Heart right ventricle (tissue), 16 donors: ENCODE measurements at regions of chr19 and their contacts with region 1.

Region 1: DNA sequence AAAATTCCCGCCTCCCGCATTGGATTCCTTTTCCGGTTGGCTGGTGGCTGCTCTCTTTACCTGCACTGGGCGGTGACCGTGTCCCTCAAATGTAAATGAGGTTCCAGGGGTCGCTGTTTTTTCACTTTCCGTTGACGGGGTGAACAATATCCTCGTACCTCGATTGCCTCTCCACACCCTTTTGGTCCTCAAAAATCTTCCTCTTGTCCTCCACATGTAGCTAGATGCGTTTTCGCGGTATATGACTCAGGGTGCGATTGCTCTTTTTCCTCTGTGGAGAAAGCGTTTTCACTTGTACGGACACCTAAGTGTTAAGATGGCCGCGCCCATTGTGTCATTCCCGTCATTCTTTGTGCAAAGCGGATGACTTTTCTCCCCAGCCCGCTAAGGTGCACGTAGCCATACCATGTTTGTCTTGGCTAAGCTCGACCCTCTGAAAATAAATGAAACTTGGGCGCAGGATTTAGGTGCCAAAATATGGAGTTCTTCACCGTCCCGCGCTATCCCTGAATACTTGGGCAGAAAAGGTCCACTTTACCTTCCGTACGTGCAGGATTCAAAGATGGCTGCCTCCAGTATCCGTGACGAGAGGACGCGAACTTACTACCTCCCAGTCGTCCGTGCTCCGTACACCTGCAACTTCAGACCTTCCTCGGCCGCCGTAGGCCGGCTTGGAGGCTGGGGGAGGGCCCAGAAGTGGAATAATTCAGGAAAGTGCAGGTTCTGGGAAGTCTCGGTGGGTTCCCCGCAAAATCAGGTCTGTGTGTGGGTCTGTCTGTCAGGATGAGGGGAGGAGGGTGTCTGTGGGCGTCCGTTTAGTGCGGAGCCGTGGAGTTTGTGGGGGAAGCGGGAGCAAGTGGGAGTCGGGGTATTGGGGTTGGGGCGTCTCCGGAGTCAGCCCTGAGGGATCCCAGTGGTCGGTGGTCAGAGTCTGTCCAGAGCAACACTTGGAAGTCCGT is at the start of gene ZNF613:
- DNase-seq: peak; percentile 86 to 92
- ATAC-seq: peak; percentile 96 to 99 (median 98)
- H3K4me3 ChIP-seq: peak within 1 kb of the TSS; percentile 69 to 91 (median 80)
- H3K27ac ChIP-seq: peak within 1 kb of the TSS; percentile 81 to 96 (median 89)
- H3K4me1 ChIP-seq: peaks cover 0 to 13% (median 10%) of the 10 kb centered on the region in 9 donors
- H3K27me3 ChIP-seq: no peaks in the 10 kb centered on the region
- CTCF ChIP-seq: peak in 6 of 9 donors; percentile 21 to 57 (median 36)
- total RNA-seq, gene ZNF613: 2.4 to 7.1 (median 5.2) TPM

Region 2: GRCh38 chr19:51784922-51785690 is 142.0 kb before region 1 on chr19:
- intact Hi-C with region 1: no loop called
- DNase-seq: peak; percentile 29 to 66
- ATAC-seq: peak; percentile 65 to 91 (median 77)
- H3K4me3 ChIP-seq: no peak overlapping the region
- H3K27ac ChIP-seq: peak overlapping the region in 7 of 10 donors; percentile 43 to 85 (median 54)
- H3K4me1 ChIP-seq: peaks cover 0 to 70% (median 5%) of the 10 kb centered on the region in 9 donors
- H3K27me3 ChIP-seq: peaks cover 0 to 4% (median 0%) of the 10 kb centered on the region in 7 donors
- CTCF ChIP-seq: no peak

Region 3: DNA sequence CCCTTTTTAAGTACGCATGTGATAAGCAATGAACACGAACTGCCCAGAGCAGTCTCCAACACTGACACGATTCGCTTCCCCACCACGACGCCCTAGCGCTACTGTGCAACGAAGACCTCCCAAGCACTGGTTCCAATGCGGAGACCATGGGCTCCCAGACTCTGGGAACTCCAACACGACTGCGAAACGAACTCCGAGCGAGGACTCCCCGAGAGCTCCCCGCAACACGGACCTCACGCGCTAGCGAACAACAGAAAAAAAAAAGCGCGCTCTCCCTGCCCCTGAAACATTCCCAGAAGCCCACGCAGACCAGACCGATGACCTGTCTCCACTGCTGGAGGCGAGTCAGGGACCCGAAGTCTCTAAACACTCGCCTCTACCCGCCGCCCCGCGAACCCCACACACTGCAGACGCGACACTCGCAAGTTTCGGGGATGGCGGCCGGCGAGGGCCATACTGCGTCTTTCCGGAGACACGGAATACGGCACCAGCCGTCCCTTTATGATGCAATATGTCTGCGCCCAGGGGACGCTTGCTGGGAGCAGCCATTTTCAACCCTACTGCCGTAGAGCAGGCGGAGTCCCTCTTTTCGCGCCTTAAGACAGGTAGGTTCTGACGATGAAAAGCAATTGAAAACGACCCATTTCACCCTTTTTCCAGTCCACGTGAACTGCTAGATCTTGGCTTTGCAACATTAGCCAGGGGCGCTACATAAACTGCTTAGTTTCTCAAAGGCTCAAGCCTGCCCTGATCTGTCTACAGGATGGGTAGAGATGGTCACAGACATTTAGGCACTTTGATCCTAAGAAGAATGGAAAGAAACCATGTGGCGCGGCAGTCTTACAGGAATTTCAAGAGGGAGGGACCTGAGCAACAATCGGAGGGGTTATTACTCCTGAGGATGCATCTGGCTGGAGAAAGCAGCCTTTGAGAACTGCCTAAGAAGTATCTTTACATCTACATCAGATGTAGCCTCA is 39.3 kb before region 1 on chr19 and contains the start of gene ZNF577:
- intact Hi-C with region 1: no loop called
- DNase-seq: peak; percentile 91 to 96
- ATAC-seq: peak; percentile 97 to 100 (median 100)
- H3K4me3 ChIP-seq: peak within 1 kb of the TSS; percentile 55 to 95 (median 77)
- H3K27ac ChIP-seq: peak within 1 kb of the TSS in 9 of 10 donors; percentile 73 to 85 (median 79)
- H3K4me1 ChIP-seq: peaks cover 0 to 15% (median 10%) of the 10 kb centered on the region in 9 donors
- H3K27me3 ChIP-seq: no peaks in the 10 kb centered on the region
- CTCF ChIP-seq: no peak
- total RNA-seq, gene ZNF577: 4.6 to 12.4 (median 8.6) TPM

Region 4: DNA sequence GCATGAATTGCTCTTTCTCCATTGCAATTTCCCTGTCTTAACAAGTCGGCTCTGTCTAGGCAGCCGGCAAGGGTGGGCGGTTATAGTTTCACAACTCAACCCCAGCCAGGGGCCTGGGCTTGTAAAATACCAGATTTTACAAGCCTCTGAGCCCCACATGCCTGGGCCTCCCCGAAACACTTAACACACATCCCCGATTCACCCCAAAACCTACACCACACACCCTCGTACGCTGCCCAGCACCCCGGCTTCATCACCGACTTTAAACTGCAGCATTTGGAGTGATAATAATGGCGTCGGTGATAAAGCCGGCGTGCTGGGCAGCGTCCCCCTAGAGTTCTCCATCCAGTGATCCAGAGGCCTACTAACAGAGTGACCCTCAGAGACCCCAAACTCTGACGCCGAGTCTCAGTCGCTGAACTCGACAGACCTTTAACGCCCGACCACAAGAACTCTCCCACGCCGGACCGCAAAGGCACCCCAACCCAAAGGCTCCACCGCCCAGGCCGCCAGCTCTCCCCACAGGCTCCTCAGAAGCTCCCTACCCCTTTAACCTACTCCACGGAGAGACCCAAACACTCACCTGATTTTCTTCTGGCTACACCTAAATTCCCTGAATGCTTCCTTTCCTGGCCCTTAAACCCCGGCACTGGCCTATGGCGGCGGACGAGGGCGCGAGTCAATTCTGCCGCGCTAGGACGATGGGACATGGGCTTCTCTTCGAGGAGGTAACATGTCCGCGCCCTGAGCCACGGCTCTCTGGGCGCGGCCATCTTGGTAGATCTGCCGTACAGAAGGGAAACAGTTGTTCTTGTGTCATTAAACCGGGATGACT is 22.5 kb before region 1 on chr19 and contains the start of gene ZNF649:
- intact Hi-C with region 1: loop called in 1 of 10 experiments (anchors 2 kb)
- DNase-seq: peak; percentile 85 to 87
- ATAC-seq: peak; percentile 99 to 100 (median 100)
- H3K4me3 ChIP-seq: peak within 1 kb of the TSS; percentile 47 to 97 (median 73)
- H3K27ac ChIP-seq: peak within 1 kb of the TSS; percentile 15 to 93 (median 86)
- H3K4me1 ChIP-seq: peaks cover 0 to 15% (median 12%) of the 10 kb centered on the region in 9 donors
- H3K27me3 ChIP-seq: peaks cover 0 to 30% (median 18%) of the 10 kb centered on the region in 7 donors
- CTCF ChIP-seq: peak in 4 of 9 donors; percentile 12 to 29 (median 24)
- total RNA-seq, gene ZNF649: 6.3 to 10.9 (median 8.3) TPM

Region 5: DNA sequence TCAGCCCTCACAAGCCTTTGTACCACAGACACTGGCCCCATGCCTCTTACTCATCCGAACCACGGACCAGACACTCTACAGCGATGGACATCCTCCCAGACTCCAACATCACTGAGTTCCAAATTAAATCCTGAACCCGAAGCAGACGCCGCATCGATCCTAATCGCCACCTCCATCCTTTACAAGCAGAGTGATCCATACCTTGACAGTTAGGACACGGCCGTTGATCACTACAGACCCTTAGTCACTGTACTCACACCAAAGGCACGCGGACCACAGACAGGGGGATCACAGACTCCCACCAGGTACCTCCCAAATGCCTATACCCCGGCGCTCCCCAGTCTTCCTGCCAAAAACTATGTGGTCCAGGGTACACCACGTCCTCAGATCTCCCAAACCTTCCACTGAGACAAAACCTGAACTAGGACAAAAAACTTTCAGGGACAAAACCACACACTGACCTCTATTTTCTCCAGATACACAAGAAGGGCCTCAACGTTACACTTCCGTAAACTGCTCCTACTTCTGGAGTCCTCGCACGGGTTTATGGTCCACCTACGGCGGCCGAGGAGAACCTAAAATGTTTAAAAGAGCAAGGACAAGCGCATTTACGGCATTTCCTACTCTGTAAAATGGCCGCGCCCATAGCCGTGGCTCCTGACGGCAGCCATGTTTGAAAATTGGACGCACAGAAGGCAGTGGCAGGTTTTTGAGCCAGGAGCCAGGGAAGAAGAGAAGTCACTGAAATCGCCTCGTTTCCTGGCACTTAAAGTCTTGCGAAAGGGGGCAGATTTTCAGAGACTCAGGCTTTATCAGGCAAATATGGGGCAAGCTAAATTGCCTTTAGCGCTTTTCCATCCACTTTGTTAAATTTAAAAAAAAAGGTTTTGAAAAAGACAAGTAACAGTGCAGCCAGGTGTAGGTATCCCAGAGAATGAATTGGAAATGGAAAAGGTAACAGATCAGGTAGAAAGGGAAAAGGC is 59.5 kb after region 1 on chr19 and contains the start of gene ZNF350:
- intact Hi-C with region 1: loop called in 2 of 10 experiments (anchors 2 to 5 kb)
- DNase-seq: peak; percentile 84 to 97
- ATAC-seq: peak; percentile 98 to 100 (median 99)
- H3K4me3 ChIP-seq: peak within 1 kb of the TSS; percentile 68 to 93 (median 84)
- H3K27ac ChIP-seq: peak within 1 kb of the TSS in 9 of 10 donors; percentile 34 to 90 (median 76)
- H3K4me1 ChIP-seq: peaks cover 7 to 37% (median 16%) of the 10 kb centered on the region in 9 donors
- H3K27me3 ChIP-seq: no peaks in the 10 kb centered on the region
- CTCF ChIP-seq: no peak
- total RNA-seq, gene ZNF350: 5.3 to 10.1 (median 7.5) TPM

Region 6: DNA sequence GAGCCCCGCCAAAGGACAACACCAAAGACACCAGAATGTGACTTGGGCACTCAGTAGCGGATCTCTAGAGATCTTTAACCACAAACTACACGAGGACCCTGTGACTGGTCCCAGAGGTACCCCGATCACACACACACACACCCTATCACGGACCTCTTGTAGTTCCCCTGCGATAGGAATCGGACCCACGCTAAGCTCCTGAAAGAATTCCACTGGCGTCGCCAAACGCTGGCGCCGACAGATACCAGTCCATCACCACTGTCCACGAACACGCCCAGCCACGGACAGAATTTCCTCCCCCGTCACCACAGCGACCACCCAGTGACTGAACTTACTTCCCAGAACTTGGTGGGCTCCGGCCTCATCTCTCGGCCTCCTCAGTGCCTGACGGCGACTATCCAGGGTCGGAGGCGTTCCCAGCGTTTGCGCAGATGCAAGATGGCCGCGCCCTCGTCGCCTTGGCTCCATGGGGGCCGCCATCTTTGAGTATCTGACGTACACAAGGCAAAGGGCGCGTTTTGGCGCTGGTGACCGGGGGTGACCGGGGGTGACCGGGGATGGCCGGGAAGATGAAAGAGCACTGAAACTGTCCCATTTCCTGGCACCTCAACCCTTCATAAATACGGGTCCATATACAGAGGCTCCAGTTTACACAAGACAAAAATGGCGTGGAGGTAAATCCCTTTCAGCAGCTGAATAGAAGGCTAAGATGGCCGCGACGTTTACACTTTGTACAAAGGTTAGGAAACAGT is 80.9 kb after region 1 on chr19 and contains the start of gene ZNF615:
- intact Hi-C with region 1: loop called in 2 of 10 experiments (anchors 2 to 5 kb)
- DNase-seq: peak; percentile 88 to 92
- ATAC-seq: peak; percentile 97 to 100 (median 100)
- H3K4me3 ChIP-seq: peak within 1 kb of the TSS; percentile 60 to 84 (median 80)
- H3K27ac ChIP-seq: peak within 1 kb of the TSS; percentile 62 to 92 (median 88)
- H3K4me1 ChIP-seq: peaks cover 0 to 23% (median 9%) of the 10 kb centered on the region in 9 donors
- H3K27me3 ChIP-seq: no peaks in the 10 kb centered on the region
- CTCF ChIP-seq: no peak
- total RNA-seq, gene ZNF615: 8.1 to 13.7 (median 10.1) TPM

Region 7: DNA sequence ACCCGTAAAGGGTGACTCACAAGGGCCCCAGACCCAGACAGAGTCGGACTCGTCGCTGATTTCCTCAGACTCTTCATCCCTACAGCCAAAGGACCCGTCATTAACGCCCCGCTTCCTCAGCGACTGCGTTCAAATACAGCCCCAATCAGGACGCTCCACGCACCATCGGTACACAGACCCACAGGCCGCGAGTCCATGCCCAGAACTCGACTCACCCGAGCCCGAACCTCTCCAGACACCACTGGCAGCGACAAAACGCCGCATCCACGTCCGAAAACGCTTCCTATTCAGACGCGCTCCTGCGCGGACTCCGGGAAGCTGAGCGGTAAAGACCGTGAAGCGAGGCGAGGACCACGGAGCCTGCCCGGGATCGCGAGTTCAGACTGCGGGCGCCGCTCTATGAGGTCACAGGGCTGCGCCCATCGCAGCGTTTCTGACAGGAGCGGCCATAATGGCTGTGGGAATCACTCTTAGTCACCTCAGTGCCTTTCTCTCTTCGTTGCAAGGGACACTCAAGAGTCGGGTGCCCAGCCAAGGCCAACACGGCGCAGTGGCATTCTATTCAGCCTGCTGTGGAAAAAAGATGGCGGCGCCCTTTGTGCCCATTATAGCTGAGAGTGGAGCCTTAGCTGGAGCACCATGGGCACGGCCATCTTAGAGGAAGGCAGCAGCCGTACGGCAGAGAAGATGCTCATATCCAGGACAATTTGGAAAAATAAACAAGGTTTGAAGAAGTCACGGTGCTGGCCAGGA is 101.1 kb after region 1 on chr19 and contains the start of gene ZNF614:
- intact Hi-C with region 1: loop called in 1 of 10 experiments (anchors 1 kb)
- DNase-seq: peak; percentile 86 to 90
- ATAC-seq: peak; percentile 98 to 99 (median 98)
- H3K4me3 ChIP-seq: peak within 1 kb of the TSS; percentile 47 to 88 (median 78)
- H3K27ac ChIP-seq: peak within 1 kb of the TSS; percentile 24 to 94 (median 92)
- H3K4me1 ChIP-seq: peaks cover 0 to 21% (median 15%) of the 10 kb centered on the region in 9 donors
- H3K27me3 ChIP-seq: no peaks in the 10 kb centered on the region
- CTCF ChIP-seq: peak in 1 of 9 donors; percentile 16
- total RNA-seq, gene ZNF614: 6.1 to 8.4 (median 6.8) TPM

Region 8: DNA sequence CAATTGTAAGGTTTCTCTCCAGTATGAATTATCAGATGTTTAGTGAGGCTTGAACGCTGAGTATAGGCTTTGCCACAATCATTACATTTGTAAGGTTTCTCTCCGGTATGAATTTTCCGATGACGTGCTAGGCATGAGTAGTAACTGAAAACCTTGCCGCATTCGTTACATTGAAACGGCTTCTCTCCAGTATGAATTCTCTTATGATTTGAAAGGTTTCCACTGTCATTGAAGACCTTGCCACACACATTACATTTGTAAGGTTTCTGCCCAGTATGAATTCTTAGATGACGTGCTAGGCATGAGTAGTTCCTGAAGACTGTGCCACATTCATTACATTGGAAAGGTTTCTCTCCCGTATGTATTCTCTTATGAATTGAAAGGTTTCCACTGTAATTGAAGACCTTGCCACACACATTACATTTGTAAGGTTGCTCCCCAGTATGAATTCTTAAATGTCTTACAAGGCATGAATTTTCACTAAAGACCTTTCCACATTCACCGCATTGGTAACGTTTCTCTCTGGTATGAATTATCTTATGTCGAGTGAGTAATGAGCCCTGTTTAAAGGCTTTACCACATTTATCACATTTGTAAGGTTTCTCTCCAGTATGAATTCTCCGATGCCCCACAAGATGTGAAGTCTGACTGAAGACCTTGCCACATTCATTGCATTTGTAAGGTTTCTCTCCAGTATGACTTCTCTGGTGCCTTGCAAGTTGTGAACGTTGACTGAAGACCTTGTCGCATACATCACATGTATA is 228.7 kb after region 1 on chr19:
- intact Hi-C with region 1: no loop called
- DNase-seq: no peak
- ATAC-seq: no peak
- H3K4me3 ChIP-seq: no peak overlapping the region
- H3K27ac ChIP-seq: no peak overlapping the region
- H3K4me1 ChIP-seq: no peaks in the 10 kb centered on the region
- H3K27me3 ChIP-seq: no peaks in the 10 kb centered on the region
- CTCF ChIP-seq: no peak

Region 9: DNA sequence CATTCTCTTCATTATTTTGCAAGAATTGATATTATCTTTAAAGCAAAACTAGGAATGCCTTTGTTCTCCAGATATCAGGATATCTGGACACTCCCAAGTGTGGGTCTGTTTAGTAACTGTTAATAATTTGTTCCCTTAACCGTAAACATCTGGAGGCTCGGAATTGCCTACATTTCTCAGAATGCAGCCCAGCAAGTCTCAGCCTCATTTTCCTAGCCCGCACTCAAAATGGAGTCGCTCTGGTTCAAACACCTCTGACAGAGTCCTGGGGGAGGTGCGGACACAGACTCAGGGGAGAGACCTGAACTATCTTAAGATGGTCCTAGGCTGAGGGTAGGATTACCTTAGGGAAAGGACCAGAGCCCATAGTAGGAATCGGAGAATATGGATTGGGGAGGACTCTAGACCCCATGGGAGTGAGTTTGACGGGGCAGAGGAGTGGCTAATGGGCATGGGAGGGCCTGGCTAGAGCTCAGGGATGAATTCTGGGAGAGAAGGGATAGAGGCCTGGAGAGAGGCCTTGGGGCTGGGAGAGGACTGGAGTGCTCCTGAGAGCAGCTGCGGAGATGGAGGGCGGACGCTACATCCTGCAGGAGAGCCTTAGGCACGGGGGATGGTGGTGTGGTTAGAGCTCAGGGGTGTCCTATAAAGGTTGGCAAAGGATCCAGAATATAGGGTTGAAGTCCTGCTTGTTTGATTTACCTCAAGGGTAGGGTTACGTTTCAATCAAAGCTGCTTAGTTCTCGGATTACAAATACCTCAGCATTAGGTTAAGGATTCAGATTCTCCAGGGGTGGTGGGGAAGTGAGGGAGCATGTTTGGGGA is 1654.1 kb after region 1 on chr19:
- intact Hi-C with region 1: no loop called
- DNase-seq: no peak
- ATAC-seq: peak in 6 of 8 donors; percentile 16 to 41 (median 24)
- H3K4me3 ChIP-seq: no peak overlapping the region
- H3K27ac ChIP-seq: no peak overlapping the region
- H3K4me1 ChIP-seq: no peaks in the 10 kb centered on the region
- H3K27me3 ChIP-seq: no peaks in the 10 kb centered on the region
- CTCF ChIP-seq: no peak